Transverse colon (tissue), 4 donors: ENCODE measurements at regions of chr2 and their contacts with region 1.

Region 1: DNA sequence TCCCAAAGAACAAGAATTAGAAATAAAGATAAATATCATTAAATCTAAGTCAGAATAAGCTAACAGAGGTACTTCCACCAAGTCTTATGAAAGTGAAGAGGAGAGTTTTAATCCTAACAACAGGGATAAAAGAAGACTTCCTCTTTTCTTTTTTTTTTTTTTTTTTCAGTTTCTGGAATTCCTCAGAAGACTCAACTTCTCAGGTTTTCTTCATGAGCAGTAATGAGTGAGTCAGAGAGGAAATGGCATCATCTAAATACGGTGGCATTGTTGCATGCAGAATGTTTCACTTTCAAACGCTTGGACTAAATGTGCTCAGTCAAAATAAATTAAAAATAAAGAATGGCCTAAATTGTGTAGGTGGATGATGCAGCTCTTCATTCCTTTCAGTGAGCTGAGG is 45.6 kb upstream of the ARHGAP15 start:
- DNase-seq: no peak
- H3K4me3 ChIP-seq: no peak overlapping the region
- H3K27ac ChIP-seq: no peak overlapping the region
- H3K4me1 ChIP-seq: no peaks in the 10 kb centered on the region
- H3K27me3 ChIP-seq: no peaks in the 10 kb centered on the region
- CTCF ChIP-seq: no peak
- EP300 ChIP-seq: no peak
- POLR2A ChIP-seq: no peak

Region 2: GRCh38 chr2:144730711-144731110 is 1647.1 kb after region 1 on chr2:
- in situ Hi-C with region 1: no loop called
- intact Hi-C with region 1: loop called (anchors 5 kb)
- DNase-seq: no peak
- H3K4me3 ChIP-seq: no peak overlapping the region
- H3K27ac ChIP-seq: no peak overlapping the region
- H3K4me1 ChIP-seq: no peaks in the 10 kb centered on the region
- H3K27me3 ChIP-seq: no peaks in the 10 kb centered on the region
- CTCF ChIP-seq: no peak
- EP300 ChIP-seq: no peak
- POLR2A ChIP-seq: no peak